ENCODE measurements at regions of chr11 and their contacts with region 1.

Region 1: DNA sequence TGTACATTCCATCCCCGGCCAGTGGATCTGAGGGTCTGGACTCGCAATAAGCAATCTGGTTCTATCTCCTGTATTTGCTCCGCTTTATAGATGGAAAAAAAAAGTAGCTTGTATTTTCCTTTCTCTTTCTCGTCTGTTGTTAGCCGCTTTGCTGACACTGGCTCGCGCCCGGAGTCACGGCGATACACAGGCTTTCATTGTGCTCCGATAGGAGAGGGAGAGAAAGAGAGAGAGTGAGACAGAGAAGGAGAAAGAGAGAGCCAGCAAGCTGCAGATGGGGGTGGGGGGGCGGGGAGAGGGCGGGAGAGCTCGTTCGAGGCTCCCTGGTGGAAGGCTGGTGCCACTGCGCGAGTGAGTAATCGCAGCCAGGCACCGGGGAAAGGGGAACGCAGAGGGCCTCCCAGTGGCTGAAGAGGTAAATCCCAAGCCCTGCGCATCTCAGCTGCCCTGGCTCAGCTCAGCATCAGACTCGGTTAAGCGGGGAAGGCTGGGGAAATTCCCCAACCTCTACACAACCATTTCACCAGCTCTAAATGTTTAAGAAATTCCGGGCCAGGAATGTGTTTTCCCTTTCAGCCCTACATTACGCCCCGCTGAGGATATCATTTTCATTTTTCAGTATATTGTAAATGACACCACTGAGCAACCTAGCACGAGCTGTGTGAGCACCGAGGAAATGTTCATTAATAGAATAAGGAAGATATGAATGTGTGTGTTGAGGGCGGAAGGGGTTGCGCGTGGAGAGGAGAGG is at the start of gene MAML2:
- DNase-seq: peak; percentile 78 to 97
- ATAC-seq: peak; percentile 85 to 92 (median 90)
- H3K4me3 ChIP-seq: peak within 1 kb of the TSS; percentile 74
- H3K4me3 Mint-ChIP-seq: peak within 1 kb of the TSS; percentile 99
- H3K27ac ChIP-seq: peak within 1 kb of the TSS; percentile 44
- H3K27ac Mint-ChIP-seq: peak within 1 kb of the TSS; percentile 81 to 92
- H3K4me1 ChIP-seq: peaks cover 40% of the 10 kb centered on the region
- H3K4me1 Mint-ChIP-seq: peaks cover 54% of the 10 kb centered on the region in 2 donors
- H3K27me3 ChIP-seq: no peaks in the 10 kb centered on the region
- H3K27me3 Mint-ChIP-seq: peaks cover 0 to 3% of the 10 kb centered on the region in 2 donors
- CTCF ChIP-seq: peak; percentile 92
- total RNA-seq, gene MAML2: 14.2 to 20.5 (median 16.1) TPM

Region 2: GRCh38 chr11:95835768-95836488 is 507.2 kb before region 1 on chr11:
- intact Hi-C with region 1: loop called (anchors 2 kb)
- DNase-seq: peak in 1 of 2 donors; percentile 75
- ATAC-seq: peak; percentile 87 to 95 (median 92)
- H3K4me3 ChIP-seq: no peak overlapping the region
- H3K4me3 Mint-ChIP-seq: no peak overlapping the region
- H3K27ac ChIP-seq: no peak overlapping the region
- H3K27ac Mint-ChIP-seq: peak overlapping the region; percentile 23 to 35
- H3K4me1 ChIP-seq: no peaks in the 10 kb centered on the region
- H3K4me1 Mint-ChIP-seq: peaks cover 0 to 7% of the 10 kb centered on the region in 2 donors
- H3K27me3 ChIP-seq: no peaks in the 10 kb centered on the region
- H3K27me3 Mint-ChIP-seq: no peaks in the 10 kb centered on the region
- CTCF ChIP-seq: peak; percentile 79

Region 3: GRCh38 chr11:95923728-95924413 is 419.3 kb before region 1 on chr11 and contains the start of gene MTMR2:
- intact Hi-C with region 1: no loop called
- DNase-seq: peak; percentile 56 to 64
- ATAC-seq: peak; percentile 91 to 95 (median 94)
- H3K4me3 ChIP-seq: peak within 1 kb of the TSS; percentile 91
- H3K4me3 Mint-ChIP-seq: peak within 1 kb of the TSS; percentile 93
- H3K27ac ChIP-seq: peak within 1 kb of the TSS; percentile 85
- H3K27ac Mint-ChIP-seq: peak within 1 kb of the TSS; percentile 87 to 94
- H3K4me1 ChIP-seq: peaks cover 2% of the 10 kb centered on the region
- H3K4me1 Mint-ChIP-seq: peaks cover 25 to 27% of the 10 kb centered on the region in 2 donors
- H3K27me3 ChIP-seq: no peaks in the 10 kb centered on the region
- H3K27me3 Mint-ChIP-seq: peaks cover 15 to 22% of the 10 kb centered on the region in 2 donors
- CTCF ChIP-seq: no peak
- total RNA-seq, gene MTMR2: 21.7 to 22.5 (median 21.8) TPM

Region 4: GRCh38 chr11:96054870-96055705 is 288.0 kb before region 1 on chr11:
- intact Hi-C with region 1: loop called (anchors 1 kb)
- DNase-seq: peak in 1 of 2 donors; percentile 59
- ATAC-seq: peak; percentile 54 to 65 (median 62)
- H3K4me3 ChIP-seq: no peak overlapping the region
- H3K4me3 Mint-ChIP-seq: no peak overlapping the region
- H3K27ac ChIP-seq: no peak overlapping the region
- H3K27ac Mint-ChIP-seq: no peak overlapping the region
- H3K4me1 ChIP-seq: no peaks in the 10 kb centered on the region
- H3K4me1 Mint-ChIP-seq: peaks cover 5% of the 10 kb centered on the region in 2 donors
- H3K27me3 ChIP-seq: no peaks in the 10 kb centered on the region
- H3K27me3 Mint-ChIP-seq: no peaks in the 10 kb centered on the region
- CTCF ChIP-seq: peak; percentile 66

Region 5: DNA sequence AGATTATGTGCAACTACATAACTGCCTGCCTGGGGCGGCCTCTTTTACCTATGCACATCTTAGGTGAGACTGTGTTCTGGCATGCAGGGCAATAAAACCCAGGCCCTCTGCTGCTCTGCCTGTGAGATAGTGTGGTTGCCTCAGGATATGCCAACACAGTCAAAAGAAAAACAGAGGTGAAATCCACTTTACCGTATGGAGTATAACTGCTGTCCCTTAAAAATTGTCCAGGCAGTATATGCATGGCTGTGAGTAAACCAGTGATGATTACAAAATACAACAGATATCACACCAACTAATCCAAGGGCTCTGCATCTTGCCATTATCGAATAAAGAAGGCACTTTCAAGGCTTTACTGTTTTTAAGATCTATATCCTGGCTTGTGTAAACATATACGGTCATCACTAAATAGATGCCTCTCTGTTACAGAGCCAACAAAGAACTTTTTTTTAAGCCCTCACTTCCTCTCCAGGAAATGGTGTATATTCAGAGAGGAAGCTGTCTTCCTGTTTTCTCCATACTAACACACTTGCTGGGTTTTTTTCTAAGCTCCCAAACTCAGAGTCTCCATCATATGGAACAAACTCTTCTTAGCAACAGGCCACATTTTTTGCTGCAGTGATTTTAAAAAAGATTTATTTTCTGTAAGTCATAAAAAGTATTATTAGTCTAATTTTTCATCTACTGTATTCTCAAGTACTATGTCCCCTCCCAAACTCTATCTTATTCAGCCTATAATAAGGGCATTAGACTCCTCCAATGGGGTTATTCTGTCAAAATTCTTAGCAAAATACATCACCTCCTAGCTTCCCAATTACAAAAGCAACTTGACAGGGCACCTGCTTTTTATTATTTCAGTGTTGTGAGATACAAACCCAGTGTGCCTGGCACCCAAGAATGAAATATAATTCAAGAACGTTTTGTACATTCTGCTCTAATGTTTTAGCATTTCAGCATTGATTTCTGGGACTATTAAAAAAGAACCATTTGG is 135.4 kb before region 1 on chr11:
- intact Hi-C with region 1: loop called (anchors 5 kb)
- DNase-seq: peak in 1 of 2 donors; percentile 66
- ATAC-seq: peak; percentile 19 to 45 (median 36)
- H3K4me3 ChIP-seq: no peak overlapping the region
- H3K4me3 Mint-ChIP-seq: peak overlapping the region; percentile 77
- H3K27ac ChIP-seq: peak overlapping the region; percentile 61
- H3K27ac Mint-ChIP-seq: peak overlapping the region; percentile 79 to 89
- H3K4me1 ChIP-seq: peaks cover 32% of the 10 kb centered on the region
- H3K4me1 Mint-ChIP-seq: peaks cover 62% of the 10 kb centered on the region in 2 donors
- H3K27me3 ChIP-seq: no peaks in the 10 kb centered on the region
- H3K27me3 Mint-ChIP-seq: no peaks in the 10 kb centered on the region
- CTCF ChIP-seq: no peak

Region 6: DNA sequence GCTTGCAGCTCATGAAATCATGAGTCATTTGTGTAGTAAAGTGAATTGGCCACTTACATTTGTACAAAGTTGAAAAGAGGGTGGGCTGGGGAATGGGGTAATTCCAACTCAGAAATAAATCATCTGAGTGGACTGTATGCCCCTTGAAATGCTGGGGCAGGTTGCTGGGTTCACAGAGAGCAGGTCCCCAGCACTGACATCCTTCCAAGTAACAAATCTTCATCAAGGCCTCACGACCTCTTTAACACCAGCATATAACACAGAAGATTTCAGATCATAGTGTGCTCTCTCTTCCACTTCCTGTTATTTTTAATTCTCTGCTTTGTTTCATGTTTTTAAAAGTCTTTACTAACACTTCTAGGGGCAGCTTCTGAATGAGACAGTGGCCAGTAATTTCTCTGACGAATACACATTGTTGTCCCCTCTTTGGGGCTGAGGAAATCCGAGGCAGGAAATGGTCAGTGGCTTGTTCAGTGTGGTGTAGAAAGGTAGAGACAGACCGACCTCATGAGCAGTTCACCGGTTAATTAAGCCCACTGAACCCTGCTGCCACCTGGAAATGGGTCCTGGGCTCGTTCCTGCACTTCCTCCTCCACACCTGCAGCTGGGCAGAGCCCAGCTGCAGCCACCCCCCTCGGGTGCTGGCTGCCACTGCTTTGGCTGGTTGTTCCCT is 127.9 kb before region 1 on chr11:
- intact Hi-C with region 1: loop called (anchors 2 kb)
- DNase-seq: peak; percentile 30 to 62
- ATAC-seq: peak; percentile 77 to 90 (median 80)
- H3K4me3 ChIP-seq: no peak overlapping the region
- H3K4me3 Mint-ChIP-seq: peak overlapping the region; percentile 65
- H3K27ac ChIP-seq: peak overlapping the region; percentile 83
- H3K27ac Mint-ChIP-seq: peak overlapping the region; percentile 89 to 90
- H3K4me1 ChIP-seq: peaks cover 39% of the 10 kb centered on the region
- H3K4me1 Mint-ChIP-seq: peaks cover 52 to 57% of the 10 kb centered on the region in 2 donors
- H3K27me3 ChIP-seq: no peaks in the 10 kb centered on the region
- H3K27me3 Mint-ChIP-seq: no peaks in the 10 kb centered on the region
- CTCF ChIP-seq: no peak

Region 7: GRCh38 chr11:96267496-96268032 is 75.6 kb before region 1 on chr11:
- intact Hi-C with region 1: loop called (anchors 5 kb)
- DNase-seq: peak; percentile 30 to 66
- ATAC-seq: peak; percentile 90 to 96 (median 95)
- H3K4me3 ChIP-seq: peak overlapping the region; percentile 5
- H3K4me3 Mint-ChIP-seq: peak overlapping the region; percentile 45
- H3K27ac ChIP-seq: peak overlapping the region; percentile 79
- H3K27ac Mint-ChIP-seq: peak overlapping the region; percentile 81 to 89
- H3K4me1 ChIP-seq: peaks cover 18% of the 10 kb centered on the region
- H3K4me1 Mint-ChIP-seq: peaks cover 56 to 63% of the 10 kb centered on the region in 2 donors
- H3K27me3 ChIP-seq: no peaks in the 10 kb centered on the region
- H3K27me3 Mint-ChIP-seq: no peaks in the 10 kb centered on the region
- CTCF ChIP-seq: no peak

Region 8: DNA sequence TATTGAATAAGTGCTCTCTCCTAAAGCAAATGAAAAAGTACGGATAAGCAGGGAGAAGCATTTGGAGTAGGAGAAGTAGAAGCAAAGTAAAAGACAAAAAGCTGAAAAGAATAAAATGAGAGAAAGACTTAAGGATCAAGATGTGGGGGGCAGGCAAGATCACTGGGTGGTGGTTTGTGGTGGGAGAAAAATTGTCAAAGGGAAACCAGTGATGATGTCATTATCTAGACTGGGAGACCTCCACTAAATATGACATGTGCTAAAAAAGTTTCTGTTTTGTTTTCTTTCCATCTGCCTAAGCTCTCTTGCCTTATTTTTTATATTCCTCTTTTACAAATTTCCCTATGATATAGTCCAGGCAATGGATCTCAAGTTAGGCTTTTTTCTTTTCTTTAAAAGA is 14.7 kb after region 1 on chr11:
- intact Hi-C with region 1: no loop called
- DNase-seq: peak in 1 of 2 donors; percentile 29
- ATAC-seq: peak in 2 of 3 donors; percentile 26 to 30
- H3K4me3 ChIP-seq: no peak overlapping the region
- H3K4me3 Mint-ChIP-seq: no peak overlapping the region
- H3K27ac ChIP-seq: no peak overlapping the region
- H3K27ac Mint-ChIP-seq: no peak overlapping the region
- H3K4me1 ChIP-seq: no peaks in the 10 kb centered on the region
- H3K4me1 Mint-ChIP-seq: peaks cover 6 to 11% of the 10 kb centered on the region in 2 donors
- H3K27me3 ChIP-seq: no peaks in the 10 kb centered on the region
- H3K27me3 Mint-ChIP-seq: no peaks in the 10 kb centered on the region
- CTCF ChIP-seq: no peak

Region 9: GRCh38 chr11:96389720-96390487 is 46.8 kb after region 1 on chr11 and contains the starts of genes CCDC82 and JRKL:
- intact Hi-C with region 1: loop called (anchors 1 kb)
- DNase-seq: peak; percentile 97
- ATAC-seq: peak; percentile 96 to 99 (median 97)
- H3K4me3 ChIP-seq: peak within 1 kb of the TSS; percentile 82
- H3K4me3 Mint-ChIP-seq: peak within 1 kb of the TSS; percentile 95
- H3K27ac ChIP-seq: peak within 1 kb of the TSS; percentile 89
- H3K27ac Mint-ChIP-seq: peak within 1 kb of the TSS; percentile 75 to 95
- H3K4me1 ChIP-seq: peaks cover 8% of the 10 kb centered on the region
- H3K4me1 Mint-ChIP-seq: peaks cover 35 to 54% of the 10 kb centered on the region in 2 donors
- H3K27me3 ChIP-seq: no peaks in the 10 kb centered on the region
- H3K27me3 Mint-ChIP-seq: no peaks in the 10 kb centered on the region
- CTCF ChIP-seq: no peak
- total RNA-seq, gene CCDC82: 36.2 to 42.1 (median 38.0) TPM
- total RNA-seq, gene JRKL: 4.5 to 6.1 (median 5.5) TPM

Measured in natural killer cell (primary cell).